ENCODE measurements at regions of chrX and their contacts with region 1.

Region 1: DNA sequence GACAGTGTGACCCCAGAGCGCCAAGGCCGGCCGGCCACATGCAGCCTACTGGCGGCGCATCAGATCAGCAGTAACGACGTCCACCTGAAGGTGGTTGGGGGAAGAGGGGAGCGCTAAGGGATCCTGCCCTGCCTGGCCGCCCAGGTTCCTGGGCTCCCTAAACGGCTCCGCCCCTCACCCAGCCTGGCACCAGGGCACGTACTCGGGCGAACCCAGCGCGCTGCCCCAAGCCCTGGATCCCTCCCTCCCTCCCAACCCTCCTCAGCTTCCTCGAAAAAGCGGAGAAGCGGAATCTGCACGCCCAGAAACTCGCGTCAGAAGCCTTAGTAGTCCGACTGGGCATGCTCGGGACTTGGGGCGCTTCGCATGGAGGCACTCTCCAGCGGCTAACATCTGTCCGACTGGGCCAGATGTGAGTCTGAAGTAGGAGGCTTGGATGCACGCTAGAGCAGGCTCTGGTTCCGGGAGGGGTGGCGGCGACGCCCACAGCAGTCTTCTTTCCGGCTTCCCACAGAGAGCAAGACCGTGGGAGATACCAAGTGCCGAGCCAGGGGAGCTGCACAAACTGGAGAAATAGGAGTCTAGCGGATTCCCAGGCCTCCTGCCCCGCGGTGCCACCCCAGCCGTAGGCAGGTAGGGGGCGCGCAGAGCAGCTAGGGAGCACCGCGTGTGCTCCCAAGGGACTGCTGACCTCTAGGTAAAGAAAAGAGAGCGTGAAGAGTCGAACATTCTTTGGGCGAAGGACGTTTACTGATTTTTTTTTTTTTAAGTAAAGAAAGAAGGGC is 114.3 kb upstream of the TEX13C start:
- DNase-seq: peak in 1 of 2 experiments; percentile 57
- H3K4me3 ChIP-seq: peak overlapping the region; percentile 50 to 76 (median 64)
- H3K27ac ChIP-seq: no peak overlapping the region
- H3K4me1 ChIP-seq: peaks cover 0 to 2% (median 0%) of the 10 kb centered on the region in 4 experiments; a peak in 1 of 7 replicates
- H3K27me3 ChIP-seq: peaks cover 2 to 22% (median 11%) of the 10 kb centered on the region in 4 experiments
- CTCF ChIP-seq: peak; percentile 38 to 67 (median 45)
- EP300 ChIP-seq: peak in 1 of 2 experiments; percentile 60; a peak in 1 of 3 replicates
- POLR2A ChIP-seq: no peak
- RAD21 ChIP-seq: peak; percentile 17 to 32; a peak in 2 of 4 replicates

Region 2: GRCh38 chrX:124895947-124896346 is 309.4 kb before region 1 on chrX:
- CTCF ChIA-PET with region 1: no interaction called
- POLR2A ChIA-PET with region 1: no interaction called
- DNase-seq: no peak
- H3K4me3 ChIP-seq: no peak overlapping the region
- H3K27ac ChIP-seq: no peak overlapping the region
- H3K4me1 ChIP-seq: peaks cover 0 to 2% (median 0%) of the 10 kb centered on the region in 4 experiments; a peak in 1 of 7 replicates
- H3K27me3 ChIP-seq: no peaks in the 10 kb centered on the region
- CTCF ChIP-seq: no peak
- EP300 ChIP-seq: no peak
- POLR2A ChIP-seq: no peak
- RAD21 ChIP-seq: no peak

Region 3: DNA sequence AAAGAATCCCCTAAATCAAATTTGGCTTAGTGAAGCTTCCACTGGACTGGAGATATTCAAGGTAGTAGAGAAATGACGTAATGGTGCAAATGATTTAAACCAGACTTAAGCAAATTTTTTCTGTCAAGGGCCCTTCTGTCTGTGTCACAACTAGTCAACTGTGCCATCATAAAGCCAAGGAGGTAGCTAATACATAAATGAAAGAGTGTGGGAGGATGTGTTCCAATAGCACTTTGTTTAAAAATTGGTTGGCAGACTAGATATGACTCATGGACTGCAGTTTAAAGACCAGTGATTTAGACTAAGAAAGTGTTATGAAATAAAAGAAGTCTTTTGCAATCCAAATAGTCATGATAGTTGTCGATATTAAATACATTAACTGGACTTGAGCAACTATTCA is 90.0 kb after region 1 on chrX:
- CTCF ChIA-PET with region 1: no interaction called
- POLR2A ChIA-PET with region 1: no interaction called
- DNase-seq: no peak
- H3K4me3 ChIP-seq: no peak overlapping the region
- H3K27ac ChIP-seq: no peak overlapping the region
- H3K4me1 ChIP-seq: no peaks in the 10 kb centered on the region
- H3K27me3 ChIP-seq: no peaks in the 10 kb centered on the region
- CTCF ChIP-seq: no peak
- EP300 ChIP-seq: no peak
- POLR2A ChIP-seq: no peak
- RAD21 ChIP-seq: no peak

Region 4: DNA sequence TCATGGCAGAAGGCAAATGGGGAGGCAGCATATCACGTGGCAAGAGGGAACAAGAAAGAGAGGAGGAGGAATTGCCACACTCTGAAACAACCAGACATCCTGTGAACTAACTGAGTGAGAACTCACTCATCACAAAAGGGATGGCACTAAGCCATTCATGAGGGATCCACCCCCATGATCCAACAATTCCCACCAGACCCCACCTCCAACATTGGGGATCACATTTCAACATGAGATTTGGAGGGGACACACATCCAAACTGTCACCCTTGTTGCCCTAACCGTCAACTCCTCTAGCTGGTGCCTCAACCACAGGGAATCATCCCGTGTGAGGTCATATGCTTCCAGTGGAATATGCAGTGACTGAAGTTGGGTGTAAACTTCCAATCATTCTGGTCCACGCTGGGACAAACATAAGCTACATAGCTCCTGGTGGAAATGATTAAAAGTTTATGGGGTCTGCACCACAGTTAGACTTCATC is 176.9 kb after region 1 on chrX:
- CTCF ChIA-PET with region 1: no interaction called
- POLR2A ChIA-PET with region 1: interaction called, 14 read pairs
- DNase-seq: peak in 1 of 2 experiments; percentile 48
- H3K4me3 ChIP-seq: no peak overlapping the region
- H3K27ac ChIP-seq: no peak overlapping the region
- H3K4me1 ChIP-seq: peaks cover 0 to 4% (median 1%) of the 10 kb centered on the region in 4 experiments; a peak in 2 of 7 replicates
- H3K27me3 ChIP-seq: no peaks in the 10 kb centered on the region
- CTCF ChIP-seq: no peak
- EP300 ChIP-seq: no peak
- POLR2A ChIP-seq: peak; percentile 54 to 83
- RAD21 ChIP-seq: no peak

Measured in H1 (cell line).